OCI-LY7 (cell line): ENCODE measurements at regions of chr5 and their contacts with region 1.

Region 1: DNA sequence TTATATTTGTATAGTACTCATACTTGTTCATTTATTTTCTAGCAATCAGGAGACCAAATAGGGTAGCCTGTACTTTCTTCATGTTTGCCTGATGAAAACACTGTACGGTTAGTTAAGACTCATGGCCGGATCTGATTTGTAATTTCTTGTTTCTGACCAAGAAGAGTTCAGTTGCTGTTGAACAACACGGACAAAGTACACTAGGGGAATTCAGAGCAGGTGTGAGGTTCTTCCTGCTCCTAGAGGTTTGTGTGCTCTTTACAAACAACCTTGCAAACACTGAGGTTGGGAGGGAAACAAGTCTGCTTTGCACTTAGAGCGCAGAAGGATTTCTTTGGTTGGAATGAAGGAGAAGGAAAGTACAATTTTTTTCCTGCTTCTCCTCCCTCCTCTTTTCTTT is 69.7 kb downstream of the TRIO start:
- DNase-seq: peak; percentile 78
- H3K4me3 ChIP-seq: peak overlapping the region; percentile 55
- H3K27ac ChIP-seq: peak overlapping the region; percentile 97
- H3K4me1 ChIP-seq: peaks cover 97% of the 10 kb centered on the region
- CTCF ChIP-seq: no peak

Region 2: DNA sequence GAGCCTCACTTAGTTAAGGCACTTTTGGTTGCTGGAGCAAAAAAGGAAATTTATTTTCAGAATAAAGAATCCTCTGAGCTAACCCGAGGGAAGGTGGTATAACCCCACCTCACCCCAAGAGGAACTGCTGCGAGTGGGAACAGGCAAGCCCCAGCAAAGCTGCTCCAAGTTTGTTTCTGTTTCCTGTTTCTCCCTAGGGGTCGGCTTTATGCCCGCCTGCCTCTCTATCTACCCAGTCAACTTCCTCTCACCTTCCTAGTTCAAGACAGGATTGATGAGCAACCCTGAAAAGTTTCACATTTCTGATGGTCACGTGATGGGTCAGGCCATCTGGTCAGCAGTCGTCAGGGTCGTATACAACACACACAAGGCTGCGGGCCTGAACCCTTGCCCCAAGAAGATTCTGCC is 38.6 kb before region 1 on chr5:
- CTCF ChIA-PET with region 1: no interaction called
- POLR2A ChIA-PET with region 1: interaction called, 3 read pairs
- intact Hi-C with region 1: loop called (anchors 5 kb)
- DNase-seq: peak; percentile 25
- H3K4me3 ChIP-seq: peak overlapping the region; percentile 38
- H3K27ac ChIP-seq: peak overlapping the region; percentile 19
- H3K4me1 ChIP-seq: peaks cover 48% of the 10 kb centered on the region
- CTCF ChIP-seq: no peak

Region 3: DNA sequence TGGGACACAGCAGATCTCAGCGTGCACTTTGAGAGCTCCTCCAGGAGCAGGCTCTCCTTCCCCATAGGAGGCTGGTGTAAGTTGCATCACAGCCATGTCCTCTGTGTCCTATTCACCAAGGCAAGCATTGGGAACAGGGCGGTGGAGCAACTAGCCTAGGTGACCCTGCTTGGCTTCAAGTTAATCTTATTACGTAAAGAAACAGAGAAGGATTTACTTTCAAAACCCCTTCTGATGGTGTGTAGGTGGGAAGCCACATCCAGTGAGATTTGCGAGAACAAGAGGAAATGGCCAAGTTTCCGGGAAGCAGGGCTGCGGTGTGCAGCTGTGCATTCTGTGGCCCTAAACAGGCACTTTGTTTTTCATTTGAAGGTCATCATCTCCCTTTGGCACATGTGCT is 10.5 kb after region 1 on chr5:
- CTCF ChIA-PET with region 1: no interaction called
- POLR2A ChIA-PET with region 1: interaction called, 11 read pairs
- intact Hi-C with region 1: no loop called
- DNase-seq: peak; percentile 67
- H3K4me3 ChIP-seq: peak overlapping the region; percentile 28
- H3K27ac ChIP-seq: peak overlapping the region; percentile 66
- H3K4me1 ChIP-seq: peaks cover 75% of the 10 kb centered on the region
- CTCF ChIP-seq: no peak

Region 4: DNA sequence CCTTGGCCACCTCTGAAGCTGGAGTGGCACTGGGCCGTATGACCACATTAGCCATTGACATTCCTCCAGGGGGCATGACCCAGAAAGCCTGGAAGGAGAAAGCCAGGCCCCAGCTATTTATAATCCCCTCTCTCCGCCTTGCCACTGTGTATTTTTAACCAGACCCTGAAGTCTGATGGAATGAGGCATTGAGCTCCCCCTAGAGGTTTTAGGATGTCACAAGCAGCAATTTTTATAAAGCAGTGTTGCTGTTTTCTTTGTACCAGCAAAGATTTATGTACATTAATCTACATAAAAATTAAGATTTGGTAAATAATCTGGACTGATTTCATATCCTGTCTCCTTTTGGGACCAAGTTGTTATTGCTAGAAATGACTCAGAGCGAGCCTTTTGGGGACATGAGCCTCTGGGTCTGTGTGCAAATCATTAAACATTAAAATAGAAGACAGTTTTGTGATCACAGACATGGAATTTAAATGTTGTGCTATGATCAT is 57.4 kb after region 1 on chr5:
- CTCF ChIA-PET with region 1: no interaction called
- POLR2A ChIA-PET with region 1: interaction called, 3 read pairs
- intact Hi-C with region 1: loop called (anchors 5 kb)
- DNase-seq: peak; percentile 70
- H3K4me3 ChIP-seq: no peak overlapping the region
- H3K27ac ChIP-seq: no peak overlapping the region
- H3K4me1 ChIP-seq: peaks cover 17% of the 10 kb centered on the region
- CTCF ChIP-seq: peak; percentile 90